ENCODE measurements at regions of chr19 and their contacts with region 1.

Region 1: GRCh38 chr19:39199025-39199424 is 2.3 kb downstream of the NCCRP1 start:
- DNase-seq: no peak
- ATAC-seq: peak; percentile 19
- H3K4me3 ChIP-seq: no peak overlapping the region
- H3K27ac ChIP-seq: no peak overlapping the region
- H3K4me1 ChIP-seq: peaks cover 13% of the 10 kb centered on the region
- H3K27me3 ChIP-seq: peaks cover 3% of the 10 kb centered on the region; the same call in 1 of the 2 replicates
- CTCF ChIP-seq: no peak

Region 2: GRCh38 chr19:39166571-39167391 is 32.2 kb before region 1 on chr19:
- CTCF ChIA-PET with region 1: interaction called, 15 read pairs
- POLR2A ChIA-PET with region 1: interaction called, 6 read pairs
- in situ Hi-C with region 1: no loop called
- intact Hi-C with region 1: no loop called
- DNase-seq: no peak
- ATAC-seq: peak; percentile 65
- H3K4me3 ChIP-seq: no peak overlapping the region
- H3K27ac ChIP-seq: no peak overlapping the region
- H3K4me1 ChIP-seq: peaks cover 33% of the 10 kb centered on the region
- H3K27me3 ChIP-seq: no peaks in the 10 kb centered on the region
- CTCF ChIP-seq: no peak

Region 3: DNA sequence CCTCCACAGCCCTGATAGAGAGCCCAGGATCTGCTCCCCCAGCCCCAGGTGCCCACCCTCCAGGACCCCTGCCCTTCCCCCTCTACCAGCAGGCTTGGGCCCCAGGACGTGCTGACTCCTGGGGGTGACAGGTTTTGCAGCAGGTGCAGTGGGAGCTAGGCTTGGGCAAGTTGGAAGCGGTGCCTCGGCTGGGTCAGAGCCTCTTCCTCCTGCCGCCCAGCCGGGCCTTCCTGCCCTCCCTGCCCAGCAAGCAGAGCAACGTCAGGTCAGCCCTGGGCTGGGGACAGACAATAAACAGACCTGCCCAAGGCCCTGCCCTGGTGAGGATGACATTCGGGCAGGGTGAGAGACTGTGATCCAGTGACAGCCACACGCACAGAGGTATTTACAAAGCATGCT is 11.5 kb before region 1 on chr19:
- CTCF ChIA-PET with region 1: interaction called, 14 read pairs
- POLR2A ChIA-PET with region 1: interaction called, 7 read pairs
- in situ Hi-C with region 1: no loop called
- intact Hi-C with region 1: no loop called
- DNase-seq: no peak
- ATAC-seq: peak; percentile 40
- H3K4me3 ChIP-seq: no peak overlapping the region
- H3K27ac ChIP-seq: no peak overlapping the region
- H3K4me1 ChIP-seq: no peaks in the 10 kb centered on the region; the same call in 1 of the 2 replicates
- H3K27me3 ChIP-seq: no peaks in the 10 kb centered on the region
- CTCF ChIP-seq: no peak

Region 4: DNA sequence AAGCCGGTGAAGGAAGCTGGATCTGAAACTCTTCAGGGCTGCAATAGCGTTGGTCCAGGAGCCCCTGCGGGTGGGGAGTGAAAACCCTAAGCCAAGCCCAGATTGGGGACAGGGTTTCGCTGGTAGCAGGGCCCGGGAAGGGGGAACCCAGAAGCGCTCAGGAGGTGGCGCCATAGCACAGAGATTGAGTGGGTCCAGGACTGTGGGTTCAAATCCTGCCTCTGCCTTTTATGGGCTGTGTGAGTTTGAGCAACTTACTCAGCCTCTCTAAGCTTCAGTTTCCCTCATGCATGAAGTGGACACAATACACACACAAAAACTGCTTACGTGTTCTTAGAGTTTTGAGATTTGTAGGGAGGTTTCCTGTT is 13.3 kb after region 1 on chr19:
- CTCF ChIA-PET with region 1: interaction called, 10 read pairs
- POLR2A ChIA-PET with region 1: interaction called, 7 read pairs
- in situ Hi-C with region 1: no loop called
- intact Hi-C with region 1: no loop called
- DNase-seq: peak; percentile 75
- ATAC-seq: peak; percentile 90
- H3K4me3 ChIP-seq: no peak overlapping the region
- H3K27ac ChIP-seq: no peak overlapping the region
- H3K4me1 ChIP-seq: no peaks in the 10 kb centered on the region
- H3K27me3 ChIP-seq: no peaks in the 10 kb centered on the region
- CTCF ChIP-seq: no peak

Region 5: DNA sequence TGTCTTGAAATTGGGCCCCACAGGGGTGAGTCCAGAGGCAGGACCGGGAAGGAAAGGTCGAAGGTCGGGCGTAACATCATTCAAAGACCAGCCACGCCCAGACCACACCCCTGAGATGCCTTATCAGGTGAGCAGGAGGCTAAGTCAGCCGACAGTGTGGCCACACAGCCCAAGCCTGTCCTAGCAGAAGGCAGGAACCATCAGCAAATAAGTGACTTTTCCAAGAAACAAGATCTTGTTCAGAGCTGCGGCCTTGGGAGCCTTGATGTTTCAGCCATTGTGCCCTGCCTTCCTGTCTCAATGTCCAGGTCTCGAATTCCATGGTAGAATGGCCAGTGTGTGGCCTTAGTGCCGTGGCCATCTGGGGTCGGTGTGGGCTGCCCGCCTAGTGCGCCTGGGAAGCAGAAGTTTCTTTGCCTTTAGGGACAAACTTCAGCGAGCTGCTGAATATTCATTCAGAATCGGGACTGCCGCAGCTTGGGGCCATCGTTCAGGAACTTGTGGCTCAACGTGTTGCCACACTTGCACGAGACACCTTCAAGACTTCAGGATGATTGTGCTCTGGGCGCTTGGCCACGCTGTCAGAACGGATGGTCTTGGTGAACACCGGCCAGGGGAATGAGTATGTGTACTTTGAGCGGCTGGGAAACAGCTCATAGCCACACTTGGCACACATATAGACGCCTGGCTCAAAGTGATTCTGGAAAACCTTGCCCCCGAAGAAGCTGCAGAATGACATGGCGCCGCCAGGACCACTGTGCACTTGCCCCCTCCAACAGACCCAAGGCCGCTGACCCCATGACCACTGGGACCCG is 55.7 kb after region 1 on chr19:
- CTCF ChIA-PET with region 1: interaction called, 10 read pairs
- POLR2A ChIA-PET with region 1: no interaction called
- in situ Hi-C with region 1: no loop called
- intact Hi-C with region 1: no loop called
- DNase-seq: no peak
- ATAC-seq: no peak
- H3K4me3 ChIP-seq: no peak overlapping the region
- H3K27ac ChIP-seq: no peak overlapping the region
- H3K4me1 ChIP-seq: no peaks in the 10 kb centered on the region
- H3K27me3 ChIP-seq: peaks cover 4% of the 10 kb centered on the region; the same call in 1 of the 2 replicates
- CTCF ChIP-seq: no peak

Region 6: DNA sequence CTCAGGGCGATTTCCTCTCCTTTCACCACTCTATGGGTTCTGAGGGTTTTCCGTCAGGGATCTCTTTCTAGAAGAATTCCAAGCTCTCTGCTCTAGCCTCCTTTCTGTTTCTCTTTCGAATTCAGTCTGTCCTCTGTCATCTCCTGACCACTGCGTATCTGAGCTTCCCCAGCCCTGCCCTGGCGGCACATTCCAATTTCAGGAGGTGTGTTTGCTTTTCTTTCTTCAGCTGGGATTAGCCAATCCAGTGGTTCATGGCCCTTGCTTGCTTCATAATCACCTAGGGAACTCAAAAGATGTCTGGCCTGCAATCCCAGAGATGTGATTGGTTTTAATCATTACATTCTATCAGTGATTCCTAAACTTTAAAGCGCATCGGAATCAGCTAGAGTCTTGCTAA is 78.6 kb after region 1 on chr19:
- CTCF ChIA-PET with region 1: no interaction called
- POLR2A ChIA-PET with region 1: interaction called, 10 read pairs
- in situ Hi-C with region 1: no loop called
- intact Hi-C with region 1: no loop called
- DNase-seq: no peak
- ATAC-seq: peak; percentile 27
- H3K4me3 ChIP-seq: no peak overlapping the region
- H3K27ac ChIP-seq: no peak overlapping the region
- H3K4me1 ChIP-seq: no peaks in the 10 kb centered on the region
- H3K27me3 ChIP-seq: peaks cover 8% of the 10 kb centered on the region; the same call in 1 of the 2 replicates
- CTCF ChIP-seq: no peak

Region 7: GRCh38 chr19:39692166-39692565 is 493.1 kb after region 1 on chr19:
- CTCF ChIA-PET with region 1: no interaction called
- POLR2A ChIA-PET with region 1: no interaction called
- in situ Hi-C with region 1: no loop called
- intact Hi-C with region 1: no loop called
- DNase-seq: no peak
- ATAC-seq: peak; percentile 29
- H3K4me3 ChIP-seq: no peak overlapping the region
- H3K27ac ChIP-seq: no peak overlapping the region
- H3K4me1 ChIP-seq: no peaks in the 10 kb centered on the region
- H3K27me3 ChIP-seq: peaks cover 78% of the 10 kb centered on the region
- CTCF ChIP-seq: no peak

Measured in Panc1 (cell line).